Heart left ventricle (tissue), 16 donors: ENCODE measurements at regions of chr3 and their contacts with region 1.

Region 1: DNA sequence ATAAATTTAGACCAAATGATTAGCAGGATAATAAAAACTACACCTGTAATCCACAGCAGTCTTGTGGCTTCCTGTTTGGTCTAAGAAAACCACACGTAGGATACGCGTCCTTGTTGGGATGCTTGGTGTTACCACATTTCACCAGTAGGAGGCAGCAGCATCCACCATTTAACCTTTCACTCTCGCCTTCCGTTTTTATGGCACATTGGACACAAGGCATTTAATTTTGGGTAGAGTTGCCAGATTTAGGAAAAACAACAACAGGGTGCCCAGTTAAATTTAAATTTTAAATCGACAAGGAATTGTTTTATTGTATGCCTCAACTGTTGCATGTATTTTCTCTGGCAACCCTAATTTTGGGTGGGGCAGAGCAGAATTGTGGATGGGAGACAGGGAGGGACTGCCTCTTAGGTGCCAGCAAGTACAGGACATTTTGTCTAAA is 6.3 kb downstream of the LRRC31 start:
- DNase-seq: peak in 4 of 5 donors; percentile 42 to 57 (median 44)
- ATAC-seq: peak; percentile 37 to 81 (median 77)
- H3K4me3 ChIP-seq: no peak overlapping the region
- H3K27ac ChIP-seq: no peak overlapping the region
- H3K4me1 ChIP-seq: peaks cover 0 to 7% (median 0%) of the 10 kb centered on the region in 12 donors
- H3K27me3 ChIP-seq: peaks cover 0 to 2% (median 0%) of the 10 kb centered on the region in 9 donors
- CTCF ChIP-seq: peak; percentile 87 to 96 (median 91)
- POLR2A ChIP-seq: no peak

Region 2: DNA sequence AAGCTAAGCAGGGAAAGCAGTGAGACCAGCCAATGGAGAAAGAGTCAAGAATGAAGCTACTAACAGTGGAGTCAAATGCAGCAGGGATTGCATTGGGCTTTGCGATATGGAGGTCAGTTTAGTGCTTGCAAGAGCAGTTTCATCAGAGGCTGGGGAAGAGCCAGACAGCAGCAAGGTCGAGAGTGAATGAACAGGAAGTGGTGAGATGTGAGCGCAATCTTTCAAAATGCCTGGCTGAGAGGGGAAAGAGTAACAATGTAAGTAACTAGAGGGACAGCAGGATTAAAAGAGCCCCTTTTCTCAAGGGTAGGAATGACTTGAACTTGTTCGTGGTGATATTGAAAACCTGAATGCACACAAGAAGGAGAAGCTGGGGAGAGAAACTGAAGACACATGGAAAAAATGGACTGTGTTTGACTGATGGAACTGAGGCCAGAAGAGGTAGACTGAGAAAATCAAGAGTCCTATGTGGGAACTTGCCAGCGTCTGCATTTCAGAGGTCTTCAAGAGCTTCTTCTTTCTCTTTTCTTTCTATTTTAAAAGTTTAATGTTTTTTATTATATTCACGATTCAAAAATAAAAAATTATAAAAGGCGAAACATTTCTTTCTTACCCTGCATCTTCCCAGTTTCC is 143.7 kb after region 1 on chr3:
- intact Hi-C with region 1: no loop called
- DNase-seq: peak in 1 of 5 donors; percentile 31
- ATAC-seq: peak in 1 of 4 donors; percentile 45
- H3K4me3 ChIP-seq: no peak overlapping the region
- H3K27ac ChIP-seq: no peak overlapping the region
- H3K4me1 ChIP-seq: peaks cover 0 to 23% (median 0%) of the 10 kb centered on the region in 12 donors
- H3K27me3 ChIP-seq: no peaks in the 10 kb centered on the region
- CTCF ChIP-seq: no peak
- POLR2A ChIP-seq: no peak

Region 3: GRCh38 chr3:170021083-170021482 is 157.6 kb after region 1 on chr3:
- intact Hi-C with region 1: loop called in 3 of 10 experiments (anchors 5 to 10 kb)
- DNase-seq: no peak
- ATAC-seq: no peak
- H3K4me3 ChIP-seq: no peak overlapping the region
- H3K27ac ChIP-seq: no peak overlapping the region
- H3K4me1 ChIP-seq: no peaks in the 10 kb centered on the region
- H3K27me3 ChIP-seq: no peaks in the 10 kb centered on the region
- CTCF ChIP-seq: peak in 7 of 12 donors; percentile 7 to 33 (median 13)
- POLR2A ChIP-seq: no peak

Region 4: GRCh38 chr3:170044795-170045244 is 181.3 kb after region 1 on chr3:
- intact Hi-C with region 1: loop called in 1 of 10 experiments (anchors 10 kb)
- DNase-seq: no peak
- ATAC-seq: peak in 1 of 4 donors; percentile 29
- H3K4me3 ChIP-seq: peak overlapping the region in 1 of 12 donors; percentile 7
- H3K27ac ChIP-seq: peak overlapping the region in 1 of 12 donors; percentile 92
- H3K4me1 ChIP-seq: peaks cover 0 to 10% (median 1%) of the 10 kb centered on the region in 12 donors
- H3K27me3 ChIP-seq: peaks cover 0 to 4% (median 0%) of the 10 kb centered on the region in 9 donors
- CTCF ChIP-seq: no peak
- POLR2A ChIP-seq: no peak

Region 5: DNA sequence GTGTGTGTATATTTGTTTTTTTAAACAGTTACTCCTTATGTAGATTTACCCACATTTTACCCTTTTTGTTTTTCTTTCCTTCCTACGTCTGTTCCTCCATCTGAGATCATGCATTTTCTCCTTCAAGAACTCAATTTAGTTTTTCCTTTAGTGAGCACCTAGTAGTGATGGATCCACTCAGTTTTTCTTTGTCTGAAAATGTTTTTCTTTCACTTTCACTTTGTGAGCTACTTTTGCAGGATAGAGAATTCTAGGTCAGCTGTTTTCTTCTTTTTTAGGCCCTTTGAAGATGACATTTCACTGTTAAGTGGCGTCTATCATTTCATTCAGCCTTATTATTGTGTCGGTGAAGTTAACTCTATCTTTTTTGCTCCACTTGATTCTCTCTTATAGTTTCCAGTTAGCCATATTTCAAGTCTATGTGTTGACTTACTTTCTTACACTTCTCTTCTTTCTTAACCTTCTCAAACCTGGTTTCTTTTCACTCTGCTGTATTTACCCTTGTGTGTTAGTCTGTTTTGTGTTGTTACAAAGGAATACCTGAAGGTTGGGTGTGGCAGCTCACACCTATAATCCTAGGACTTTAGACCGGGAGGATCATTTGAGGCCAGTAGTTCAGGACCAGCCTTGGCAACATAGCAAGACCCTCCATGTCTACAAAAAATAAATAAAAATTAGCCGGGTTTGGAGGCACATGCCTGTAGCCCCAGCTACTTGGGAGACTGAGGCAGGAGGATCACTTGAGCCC is 414.5 kb after region 1 on chr3:
- intact Hi-C with region 1: loop called in 1 of 10 experiments (anchors 10 kb)
- DNase-seq: no peak
- ATAC-seq: no peak
- H3K4me3 ChIP-seq: peak overlapping the region in 2 of 12 donors; percentile 16 to 20
- H3K27ac ChIP-seq: peak overlapping the region in 1 of 12 donors; percentile 14
- H3K4me1 ChIP-seq: peaks cover 0 to 9% (median 0%) of the 10 kb centered on the region in 12 donors
- H3K27me3 ChIP-seq: no peaks in the 10 kb centered on the region
- CTCF ChIP-seq: no peak
- POLR2A ChIP-seq: no peak